H1 (cell line): ENCODE measurements at regions of chr16 and their contacts with region 1.

Region 1: GRCh38 chr16:17467923-17468540 is 2.7 kb downstream of the XYLT1 start:
- DNase-seq: peak in 1 of 2 experiments; percentile 72
- H3K4me3 ChIP-seq: peak overlapping the region in 1 of 4 experiments; percentile 36; a peak in 1 of 8 replicates
- H3K27ac ChIP-seq: no peak overlapping the region
- H3K4me1 ChIP-seq: peaks cover 13 to 35% (median 21%) of the 10 kb centered on the region in 4 experiments; a peak in 6 of 7 replicates
- H3K27me3 ChIP-seq: peaks cover 0 to 28% (median 15%) of the 10 kb centered on the region in 4 experiments; a peak in 5 of 7 replicates
- CTCF ChIP-seq: peak; percentile 80 to 90 (median 83)
- EP300 ChIP-seq: no peak
- POLR2A ChIP-seq: no peak
- RAD21 ChIP-seq: peak; percentile 90 to 97

Region 2: DNA sequence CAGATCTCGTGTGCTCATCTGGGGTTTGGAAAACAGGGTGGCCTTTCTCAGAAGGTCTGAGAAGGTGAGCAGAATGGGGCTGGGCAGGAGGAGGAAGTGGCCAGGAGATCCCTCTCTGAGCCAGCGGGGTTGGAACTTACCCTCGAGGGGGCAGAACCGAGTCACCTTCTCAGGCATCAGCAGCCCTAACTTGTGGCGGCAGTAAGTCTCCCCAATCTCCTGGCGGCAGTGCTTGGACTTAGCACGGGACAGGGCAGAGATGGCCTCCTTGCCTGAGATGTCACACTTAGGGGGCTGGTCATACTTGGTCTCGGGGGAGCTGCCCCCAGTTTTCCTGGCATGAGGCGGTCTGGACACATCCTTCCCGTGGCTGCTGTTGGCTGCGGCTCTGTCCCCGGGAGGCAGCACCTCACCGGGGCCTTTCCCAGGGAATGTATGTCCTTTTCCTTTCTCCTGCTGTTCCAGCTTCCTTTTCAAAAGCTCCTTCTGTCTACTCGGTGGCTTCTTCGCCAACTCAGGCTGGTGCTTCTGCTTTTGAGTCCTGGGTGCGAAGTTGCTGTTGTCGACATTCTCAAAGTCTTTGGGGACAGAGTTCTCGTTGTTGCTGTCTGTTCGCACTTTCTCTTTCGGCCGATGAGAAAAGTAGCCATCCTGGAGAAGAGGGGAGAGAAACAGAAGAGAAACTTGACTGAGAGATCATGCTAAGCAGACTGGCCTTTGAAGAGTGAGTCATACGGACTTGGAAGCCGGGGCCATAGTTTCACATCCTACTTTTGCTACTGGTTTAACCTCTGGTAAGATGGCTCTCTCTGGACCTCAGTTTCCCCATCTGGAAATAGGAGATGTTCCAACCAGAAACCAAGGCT is 209.0 kb before region 1 on chr16:
- CTCF ChIA-PET with region 1: interaction called, 17 read pairs
- POLR2A ChIA-PET with region 1: no interaction called
- DNase-seq: no peak
- H3K4me3 ChIP-seq: no peak overlapping the region
- H3K27ac ChIP-seq: no peak overlapping the region
- H3K4me1 ChIP-seq: peaks cover 0 to 3% (median 0%) of the 10 kb centered on the region in 4 experiments; a peak in 1 of 7 replicates
- H3K27me3 ChIP-seq: no peaks in the 10 kb centered on the region
- CTCF ChIP-seq: peak; percentile 22 to 43 (median 40); a peak in 3 of 4 replicates
- EP300 ChIP-seq: no peak
- POLR2A ChIP-seq: no peak
- RAD21 ChIP-seq: peak; percentile 10 to 36; a peak in 3 of 4 replicates

Region 3: DNA sequence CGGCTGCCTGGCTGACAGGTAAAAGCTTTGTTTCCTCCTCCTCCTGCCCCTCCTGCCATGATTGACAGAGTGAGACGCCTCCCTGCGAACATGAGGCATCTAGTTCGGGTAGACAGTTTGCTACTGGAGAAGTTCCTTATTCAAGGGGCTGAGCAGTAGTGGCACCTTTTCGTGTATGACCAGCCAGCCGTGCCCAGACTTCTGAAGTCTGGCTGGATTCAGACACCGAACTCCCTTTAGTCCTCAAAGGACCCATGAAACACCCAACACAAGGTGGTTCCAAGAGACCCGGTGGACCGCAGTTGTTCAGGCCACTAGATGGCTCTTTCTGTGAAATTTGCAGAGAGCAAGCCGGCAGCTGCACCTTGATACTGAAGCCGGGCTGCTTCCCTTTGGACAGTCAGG is 190.1 kb before region 1 on chr16:
- CTCF ChIA-PET with region 1: interaction called, 30 read pairs
- POLR2A ChIA-PET with region 1: no interaction called
- DNase-seq: peak in 1 of 2 experiments; percentile 59
- H3K4me3 ChIP-seq: no peak overlapping the region
- H3K27ac ChIP-seq: no peak overlapping the region
- H3K4me1 ChIP-seq: peaks cover 0 to 5% (median 2%) of the 10 kb centered on the region in 4 experiments; a peak in 6 of 7 replicates
- H3K27me3 ChIP-seq: no peaks in the 10 kb centered on the region
- CTCF ChIP-seq: peak; percentile 52 to 67 (median 66)
- EP300 ChIP-seq: no peak
- POLR2A ChIP-seq: no peak
- RAD21 ChIP-seq: peak; percentile 51 to 75

Region 4: DNA sequence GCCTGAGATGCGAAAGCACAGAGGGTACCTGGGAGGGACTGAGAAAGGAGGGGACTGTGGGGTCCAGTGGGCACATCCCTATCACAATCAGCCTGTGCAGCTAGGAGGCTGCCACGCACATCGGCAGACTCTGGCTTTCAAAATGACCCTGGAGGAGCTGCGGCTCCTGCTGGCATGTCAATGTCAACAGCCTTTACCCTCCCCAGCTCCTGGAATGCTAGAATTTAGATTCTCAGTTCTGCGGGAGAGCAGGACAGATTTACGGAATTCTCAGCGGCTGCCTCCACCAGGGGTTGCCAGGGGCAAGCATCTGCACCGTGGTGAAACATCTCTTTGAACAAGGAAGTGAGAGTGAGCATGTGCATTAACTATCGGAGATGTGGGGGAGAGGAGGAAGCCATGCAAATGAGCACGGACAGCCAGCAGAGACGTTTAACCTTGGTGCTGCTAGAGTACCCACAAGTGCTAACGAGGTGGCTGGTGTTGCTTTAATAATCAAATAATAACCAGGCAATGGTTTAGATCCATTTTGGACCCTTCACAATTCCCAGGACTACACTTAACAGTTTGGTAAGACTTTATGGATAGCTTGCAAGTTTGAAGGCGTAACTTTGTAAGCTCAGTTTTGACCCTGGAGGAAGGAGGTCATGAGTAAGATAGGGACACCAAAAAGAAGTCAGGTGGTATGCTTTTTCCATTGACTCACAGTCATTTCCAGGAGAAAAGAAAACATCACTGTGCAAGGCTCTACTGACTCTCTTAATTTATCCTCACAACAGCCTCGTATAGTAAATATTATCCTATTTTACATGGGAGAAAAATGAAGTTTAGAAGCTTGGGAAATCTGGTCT is 51.3 kb before region 1 on chr16:
- CTCF ChIA-PET with region 1: interaction called, 26 read pairs
- POLR2A ChIA-PET with region 1: interaction called, 3 read pairs
- DNase-seq: no peak
- H3K4me3 ChIP-seq: 0 out of 8 replicates have a peak overlapping the region, but pooled peaks of 1 of the 4 experiments have one; percentile 9
- H3K27ac ChIP-seq: no peak overlapping the region
- H3K4me1 ChIP-seq: peaks cover 4 to 20% (median 13%) of the 10 kb centered on the region in 4 experiments
- H3K27me3 ChIP-seq: no peaks in the 10 kb centered on the region
- CTCF ChIP-seq: peak in 2 of 3 experiments; percentile 16 to 28; a peak in 2 of 4 replicates
- EP300 ChIP-seq: no peak
- POLR2A ChIP-seq: no peak
- RAD21 ChIP-seq: peak; percentile 19 to 48; a peak in 3 of 4 replicates